Activated T-helper 1 cell treated with anti-CD3 and anti-CD28 coated beads, Interleukin-12 subunit alpha, Interleukin-12 subunit beta, Interleukin-2, Interleukin-4 antibody, amounts not matched to agents 30 ng/mL and 10 ng/mL and 1 ng/mL, durations not matched to agents 14 hours and 24 hours and 36 hours (primary cell): ENCODE measurements at regions of chr5 and their contacts with region 1.

Region 1: GRCh38 chr5:132746954-132747615 is at the start of gene CCNI2:
- DNase-seq: peak; percentile 65
- H3K4me3 Mint-ChIP-seq: peak within 1 kb of the TSS; percentile 82
- H3K27ac Mint-ChIP-seq: peak within 1 kb of the TSS; percentile 86
- H3K4me1 Mint-ChIP-seq: peaks cover 45% of the 10 kb centered on the region
- H3K27me3 Mint-ChIP-seq: peaks cover 20% of the 10 kb centered on the region
- total RNA-seq, gene CCNI2: 52.5 and 55.6 TPM in 2 replicates

Region 2: DNA sequence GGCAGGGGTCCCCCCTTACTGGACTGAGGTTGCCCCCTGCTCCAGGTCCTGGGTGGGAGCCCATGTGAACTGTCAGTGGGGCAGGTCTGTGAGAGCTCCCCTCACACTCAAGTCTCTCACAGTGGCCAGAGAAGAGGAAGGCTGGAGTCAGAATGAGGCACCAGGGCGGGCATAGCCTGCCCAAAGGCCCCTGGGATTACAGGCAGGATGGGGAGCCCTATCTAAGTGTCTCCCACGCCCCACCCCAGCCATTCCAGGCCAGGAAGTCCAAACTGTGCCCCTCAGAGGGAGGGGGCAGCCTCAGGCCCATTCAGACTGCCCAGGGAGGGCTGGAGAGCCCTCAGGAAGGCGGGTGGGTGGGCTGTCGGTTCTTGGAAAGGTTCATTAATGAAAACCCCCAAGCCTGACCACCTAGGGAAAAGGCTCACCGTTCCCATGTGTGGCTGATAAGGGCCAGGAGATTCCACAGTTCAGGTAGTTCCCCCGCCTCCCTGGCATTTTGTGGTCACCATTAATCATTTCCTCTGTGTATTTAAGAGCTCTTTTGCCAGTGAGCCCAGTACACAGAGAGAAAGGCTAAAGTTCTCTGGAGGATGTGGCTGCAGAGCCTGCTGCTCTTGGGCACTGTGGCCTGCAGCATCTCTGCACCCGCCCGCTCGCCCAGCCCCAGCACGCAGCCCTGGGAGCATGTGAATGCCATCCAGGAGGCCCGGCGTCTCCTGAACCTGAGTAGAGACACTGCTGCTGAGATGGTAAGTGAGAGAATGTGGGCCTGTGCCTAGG is 673.7 kb before region 1 on chr5 and contains the start of gene CSF2:
- intact Hi-C with region 1: loop called (anchors 10 kb)
- DNase-seq: no peak
- H3K4me3 Mint-ChIP-seq: peak within 1 kb of the TSS; percentile 90
- H3K27ac Mint-ChIP-seq: peak within 1 kb of the TSS; percentile 97
- H3K4me1 Mint-ChIP-seq: peaks cover 92% of the 10 kb centered on the region
- H3K27me3 Mint-ChIP-seq: peaks cover 1% of the 10 kb centered on the region
- total RNA-seq, gene CSF2: 1,648 and 1,678 TPM in 2 replicates

Region 3: DNA sequence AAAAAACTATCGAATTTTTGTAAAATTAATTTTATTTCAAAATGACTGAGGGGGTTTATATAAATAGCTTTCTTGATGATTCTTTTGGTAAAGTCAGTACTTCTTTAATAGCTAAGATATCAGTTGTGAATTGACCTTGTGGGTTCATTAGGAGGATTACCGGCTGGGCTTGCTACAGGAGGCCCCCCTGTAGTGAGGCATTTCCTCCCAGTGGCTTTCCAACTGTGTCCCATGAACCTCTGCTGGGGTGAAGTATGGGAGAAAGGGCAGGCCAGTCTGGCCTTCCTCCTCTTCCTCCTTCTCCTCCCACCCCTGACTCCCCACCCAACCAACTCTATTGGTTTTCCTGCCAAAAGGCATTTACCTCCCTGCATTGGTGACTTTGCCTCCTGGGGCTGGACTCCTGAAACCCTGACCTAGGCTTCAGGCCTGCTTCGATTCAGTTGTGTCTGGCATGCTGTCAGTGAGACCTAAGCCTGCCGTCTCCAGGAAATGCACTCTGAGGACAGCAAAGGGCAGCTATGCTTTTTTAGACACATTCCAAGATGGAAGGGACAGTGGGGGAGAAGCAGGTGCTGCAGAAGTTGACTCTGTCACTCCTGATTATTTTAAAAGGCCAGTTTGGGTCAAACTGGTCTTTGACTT is 449.5 kb after region 1 on chr5:
- intact Hi-C with region 1: no loop called
- DNase-seq: no peak
- H3K4me3 Mint-ChIP-seq: no peak overlapping the region
- H3K27ac Mint-ChIP-seq: no peak overlapping the region
- H3K4me1 Mint-ChIP-seq: no peaks in the 10 kb centered on the region
- H3K27me3 Mint-ChIP-seq: peaks cover 5% of the 10 kb centered on the region